Colonic mucosa (tissue), 4 donors: ENCODE measurements at regions of chr3 and their contacts with region 1.

Region 1: GRCh38 chr3:167929968-167930367 is 165.8 kb downstream of the GOLIM4 start:
- DNase-seq: no peak
- H3K4me3 ChIP-seq: no peak overlapping the region
- H3K27ac ChIP-seq: no peak overlapping the region
- H3K4me1 ChIP-seq: no peaks in the 10 kb centered on the region
- H3K27me3 ChIP-seq: no peaks in the 10 kb centered on the region
- CTCF ChIP-seq: no peak

Region 2: GRCh38 chr3:167861649-167862048 is 68.3 kb before region 1 on chr3:
- intact Hi-C with region 1: no loop called
- DNase-seq: no peak
- H3K4me3 ChIP-seq: no peak overlapping the region
- H3K27ac ChIP-seq: no peak overlapping the region
- H3K4me1 ChIP-seq: no peaks in the 10 kb centered on the region
- H3K27me3 ChIP-seq: no peaks in the 10 kb centered on the region
- CTCF ChIP-seq: no peak

Region 3: DNA sequence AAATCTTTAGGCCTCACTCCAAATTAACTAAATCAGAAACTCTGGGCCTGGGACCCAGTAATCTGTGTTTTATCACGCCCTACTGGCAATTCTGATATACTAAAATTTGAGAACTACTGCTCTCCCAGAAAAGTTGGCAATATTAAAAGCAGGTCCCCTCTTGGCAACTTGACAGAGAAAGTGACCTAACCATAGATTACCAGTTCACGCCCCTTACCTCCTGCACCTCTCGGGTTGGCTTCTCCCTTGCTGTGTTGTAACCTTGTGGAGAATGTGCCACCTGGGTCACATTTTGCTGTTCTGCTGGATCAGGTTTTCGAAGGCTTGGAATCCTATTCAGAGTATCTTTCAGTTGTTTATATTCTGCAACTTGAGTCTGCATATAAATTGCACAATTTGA is 106.7 kb after region 1 on chr3:
- intact Hi-C with region 1: loop called (anchors 5 kb)
- DNase-seq: no peak
- H3K4me3 ChIP-seq: no peak overlapping the region
- H3K27ac ChIP-seq: no peak overlapping the region
- H3K4me1 ChIP-seq: no peaks in the 10 kb centered on the region
- H3K27me3 ChIP-seq: no peaks in the 10 kb centered on the region
- CTCF ChIP-seq: no peak

Region 4: DNA sequence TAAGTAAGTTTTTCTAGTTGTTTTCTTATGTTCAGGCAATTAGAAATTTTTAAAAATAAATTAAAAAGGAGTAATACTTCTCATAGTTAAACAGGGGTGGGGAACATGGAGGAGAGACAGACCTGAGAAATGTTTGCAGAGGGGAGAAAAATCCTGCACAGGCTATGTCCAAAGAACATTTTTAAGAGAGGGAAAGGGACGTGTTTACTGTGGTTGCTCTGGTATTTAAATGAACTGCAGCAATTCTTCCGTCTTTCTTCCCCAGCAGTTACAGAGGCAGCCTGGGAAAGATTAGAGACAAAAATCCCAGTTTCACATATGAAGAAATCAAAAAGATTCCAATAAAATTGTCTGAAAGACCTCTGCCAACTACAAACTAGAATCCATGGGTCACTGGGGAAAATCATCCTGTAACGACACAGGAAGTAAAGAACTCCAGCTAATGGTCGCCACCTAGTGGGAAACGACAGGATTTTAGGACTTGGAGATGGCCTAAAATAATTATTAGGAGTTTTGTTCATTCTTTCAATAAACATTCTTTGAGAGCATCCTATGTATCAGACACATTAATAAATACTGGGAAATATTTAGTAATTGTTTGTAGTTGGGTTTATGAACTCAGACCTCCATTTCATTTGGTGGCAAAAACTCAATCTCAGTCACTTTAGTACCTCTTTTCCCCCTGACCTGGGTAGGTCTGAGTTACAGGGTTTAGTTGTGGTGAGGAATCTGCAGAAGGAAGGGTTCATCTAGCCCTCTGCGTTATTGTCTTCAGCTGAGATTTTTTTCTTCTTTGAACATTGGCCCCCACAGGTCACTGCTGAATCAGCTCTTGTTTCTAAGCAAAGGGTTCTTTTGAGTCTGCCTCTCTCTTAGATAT is 235.7 kb after region 1 on chr3:
- intact Hi-C with region 1: loop called (anchors 5 kb)
- DNase-seq: peak; percentile 81
- H3K4me3 ChIP-seq: no peak overlapping the region
- H3K27ac ChIP-seq: no peak overlapping the region
- H3K4me1 ChIP-seq: no peaks in the 10 kb centered on the region
- H3K27me3 ChIP-seq: no peaks in the 10 kb centered on the region
- CTCF ChIP-seq: peak; percentile 71